ENCODE measurements at regions of chr7 and their contacts with region 1.

Region 1: GRCh38 chr7:132203021-132203420 is 373.2 kb downstream of the PLXNA4 start:
- DNase-seq: no peak
- ATAC-seq: peak; percentile 76
- H3K4me3 Mint-ChIP-seq: no peak overlapping the region
- H3K27ac Mint-ChIP-seq: no peak overlapping the region
- H3K4me1 Mint-ChIP-seq: peaks cover 34% of the 10 kb centered on the region
- H3K27me3 Mint-ChIP-seq: peaks cover 8% of the 10 kb centered on the region; the same call in 1 of the 2 replicates
- CTCF ChIP-seq: no peak

Region 2: DNA sequence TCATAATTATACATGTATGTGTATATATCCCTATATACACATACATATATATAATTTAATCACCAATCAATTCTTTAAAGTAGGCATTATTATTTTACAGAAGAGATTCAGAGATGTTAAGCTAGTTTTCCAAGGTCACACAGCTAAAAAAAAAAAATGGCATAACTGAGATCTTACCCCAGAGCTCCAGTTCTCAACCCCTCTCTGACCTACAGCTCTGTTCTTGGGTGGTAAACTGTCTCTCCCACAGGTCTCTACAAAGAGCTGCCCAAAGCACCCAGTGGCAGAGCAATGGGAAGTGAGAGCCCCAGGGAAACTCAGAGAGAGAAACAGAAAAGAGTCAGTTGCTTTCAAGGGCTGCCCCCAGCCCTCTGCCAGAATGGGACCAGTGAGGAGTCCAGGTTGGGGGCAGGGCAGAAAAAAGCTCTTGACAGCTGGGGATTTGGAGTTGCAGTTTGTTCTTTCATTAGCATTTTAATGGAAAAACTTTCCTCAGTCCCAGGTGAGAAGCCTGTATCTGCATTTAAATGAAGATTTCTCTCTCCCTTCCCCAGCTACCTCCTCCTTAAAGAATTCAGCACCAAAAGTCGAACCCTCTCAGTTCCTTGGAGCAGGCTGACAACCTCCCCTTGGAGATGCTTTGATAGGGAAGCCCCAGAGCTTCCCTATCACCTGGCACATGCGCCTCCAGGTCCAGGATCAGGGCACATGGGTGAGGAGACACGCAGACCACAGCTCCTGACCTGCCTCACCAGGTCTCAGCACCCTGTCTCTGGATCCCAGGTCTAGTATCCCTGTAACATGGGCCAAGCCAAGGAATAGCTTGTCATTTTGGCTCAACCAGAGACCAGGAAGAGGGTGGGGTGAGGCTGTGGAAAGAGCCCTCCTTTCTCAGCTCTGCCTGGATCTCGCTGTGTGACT is 14.9 kb before region 1 on chr7:
- CTCF ChIA-PET with region 1: interaction called, 13 read pairs
- POLR2A ChIA-PET with region 1: no interaction called
- DNase-seq: peak; percentile 76
- ATAC-seq: peak; percentile 94
- H3K4me3 Mint-ChIP-seq: peak overlapping the region; percentile 39
- H3K27ac Mint-ChIP-seq: peak overlapping the region; percentile 99
- H3K4me1 Mint-ChIP-seq: peaks cover 59% of the 10 kb centered on the region
- H3K27me3 Mint-ChIP-seq: peaks cover 16% of the 10 kb centered on the region
- CTCF ChIP-seq: no peak

Measured in WTC11 (cell line).